Cardiac septum (tissue), 1 donor: ENCODE measurements at regions of chr6 and their contacts with region 1.

Region 1: DNA sequence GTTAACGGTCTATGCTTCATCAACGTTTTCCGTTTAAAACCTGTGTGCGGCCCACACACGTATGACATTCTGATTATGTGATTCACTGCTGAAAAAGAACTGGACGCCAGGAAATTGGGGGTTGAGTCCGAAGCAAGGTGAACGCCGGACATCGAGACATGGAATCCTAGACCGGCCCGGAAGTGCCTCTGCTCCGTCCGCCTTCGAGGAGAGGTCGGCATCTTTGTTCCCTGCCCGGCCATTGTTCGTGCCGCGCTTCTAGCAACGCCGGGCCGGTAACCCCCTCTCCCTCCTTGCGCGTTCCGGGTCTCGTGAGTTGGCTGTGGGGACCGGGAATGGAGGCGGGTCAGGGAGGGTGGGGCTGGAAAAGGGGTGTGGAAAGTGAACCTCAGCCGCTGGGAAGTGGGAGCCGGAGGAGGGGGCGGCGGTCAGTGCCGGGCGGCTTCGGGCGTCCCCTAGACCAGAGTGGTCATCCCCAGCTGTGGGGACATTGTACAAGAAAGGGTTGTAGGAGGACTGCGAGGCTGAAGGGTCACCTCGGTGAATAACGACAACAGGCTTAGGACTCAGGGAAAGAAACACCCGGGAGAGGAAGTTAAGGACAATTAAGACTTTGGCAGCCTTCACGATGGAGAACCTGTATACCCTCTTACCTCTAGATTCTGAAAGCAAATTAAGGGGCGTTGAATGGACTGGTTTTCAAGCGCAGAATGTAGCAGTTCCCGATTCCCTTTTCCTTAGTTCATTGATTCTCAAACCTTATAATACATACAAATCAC is at the start of gene ZSCAN9:
- DNase-seq: peak; percentile 92
- total RNA-seq, gene ZSCAN9: 8.4 TPM

Region 2: GRCh38 chr6:28136585-28137504 is 88.4 kb before region 1 on chr6:
- intact Hi-C with region 1: loop called (anchors 2 kb)
- DNase-seq: peak; percentile 92